A549 (cell line): ENCODE measurements at regions of chr19 and their contacts with region 1.

Region 1: GRCh38 chr19:35495107-35496064 is 5.1 kb upstream of the KRTDAP start:
- DNase-seq: peak; percentile 81 to 97
- ATAC-seq: peak; percentile 90 to 95
- H3K4me3 ChIP-seq: peak overlapping the region; percentile 24; the same call in 2 of the 3 replicates
- H3K27ac ChIP-seq: peak overlapping the region; percentile 35 to 64; a peak in 3 of 6 replicates
- H3K4me1 ChIP-seq: no peaks in the 10 kb centered on the region; the same call in 2 of the 3 replicates
- CTCF ChIP-seq: peak; percentile 96
- EP300 ChIP-seq: no peak
- POLR2A ChIP-seq: no peak
- RAD21 ChIP-seq: peak; percentile 83 to 85

Region 2: DNA sequence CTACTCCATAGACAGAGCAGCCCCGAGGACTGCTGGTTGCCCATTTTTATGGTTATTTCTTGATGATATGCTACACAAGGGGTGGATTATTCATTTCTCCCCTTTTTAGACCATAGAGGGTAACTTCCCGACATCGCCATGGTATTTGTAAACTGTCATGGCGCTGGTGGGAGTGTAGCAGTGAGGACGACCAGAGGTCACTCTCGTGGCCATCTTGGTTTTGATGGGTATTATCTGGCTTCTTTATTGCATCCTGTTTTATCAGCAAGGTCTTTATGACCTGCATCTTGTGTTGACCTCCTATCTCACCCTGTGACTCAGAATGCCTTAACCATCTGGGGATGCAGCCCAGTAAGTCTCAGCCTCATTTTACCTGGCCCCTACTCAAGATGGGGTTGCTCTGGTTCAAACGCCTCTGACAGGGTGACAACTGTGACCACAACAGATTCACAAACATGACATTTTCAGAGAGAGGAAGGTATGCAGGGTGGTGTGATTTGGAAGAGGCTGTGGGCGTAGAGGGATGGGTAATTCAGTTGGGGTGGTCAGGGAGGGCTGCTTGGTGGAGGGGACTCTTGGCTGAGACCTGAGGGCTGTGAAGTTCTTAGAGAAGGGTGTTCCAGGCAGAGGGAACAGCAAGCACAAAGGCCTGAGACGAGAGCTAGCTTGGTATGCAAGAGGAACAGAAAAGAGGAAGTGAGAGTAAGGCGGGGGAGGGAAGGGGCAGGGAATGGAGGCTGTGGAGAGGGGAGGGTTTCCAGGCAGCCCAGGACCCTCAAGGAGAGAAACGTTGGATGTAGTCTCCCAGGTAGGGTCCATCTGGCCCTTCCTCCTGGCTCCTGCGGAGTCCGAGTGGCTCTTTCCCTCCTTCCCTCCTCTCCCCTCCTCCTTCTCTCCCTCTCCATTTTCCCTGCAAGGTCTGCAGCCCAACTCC is 290.3 kb before region 1 on chr19:
- CTCF ChIA-PET with region 1: no interaction called
- POLR2A ChIA-PET with region 1: no interaction called
- DNase-seq: no peak
- ATAC-seq: 0 out of 6 replicates have a peak, but pooled peaks of 1 of the 2 experiments have one; percentile 17
- H3K4me3 ChIP-seq: no peak overlapping the region
- H3K27ac ChIP-seq: no peak overlapping the region
- H3K4me1 ChIP-seq: no peaks in the 10 kb centered on the region
- CTCF ChIP-seq: no peak
- EP300 ChIP-seq: no peak
- POLR2A ChIP-seq: no peak
- RAD21 ChIP-seq: no peak

Region 3: GRCh38 chr19:35346193-35347052 is 149.0 kb before region 1 on chr19:
- CTCF ChIA-PET with region 1: interaction called, 256 read pairs
- POLR2A ChIA-PET with region 1: no interaction called
- DNase-seq: no peak
- ATAC-seq: no peak
- H3K4me3 ChIP-seq: no peak overlapping the region
- H3K27ac ChIP-seq: no peak overlapping the region
- H3K4me1 ChIP-seq: no peaks in the 10 kb centered on the region
- CTCF ChIP-seq: no peak
- EP300 ChIP-seq: no peak
- POLR2A ChIP-seq: no peak
- RAD21 ChIP-seq: no peak

Region 4: DNA sequence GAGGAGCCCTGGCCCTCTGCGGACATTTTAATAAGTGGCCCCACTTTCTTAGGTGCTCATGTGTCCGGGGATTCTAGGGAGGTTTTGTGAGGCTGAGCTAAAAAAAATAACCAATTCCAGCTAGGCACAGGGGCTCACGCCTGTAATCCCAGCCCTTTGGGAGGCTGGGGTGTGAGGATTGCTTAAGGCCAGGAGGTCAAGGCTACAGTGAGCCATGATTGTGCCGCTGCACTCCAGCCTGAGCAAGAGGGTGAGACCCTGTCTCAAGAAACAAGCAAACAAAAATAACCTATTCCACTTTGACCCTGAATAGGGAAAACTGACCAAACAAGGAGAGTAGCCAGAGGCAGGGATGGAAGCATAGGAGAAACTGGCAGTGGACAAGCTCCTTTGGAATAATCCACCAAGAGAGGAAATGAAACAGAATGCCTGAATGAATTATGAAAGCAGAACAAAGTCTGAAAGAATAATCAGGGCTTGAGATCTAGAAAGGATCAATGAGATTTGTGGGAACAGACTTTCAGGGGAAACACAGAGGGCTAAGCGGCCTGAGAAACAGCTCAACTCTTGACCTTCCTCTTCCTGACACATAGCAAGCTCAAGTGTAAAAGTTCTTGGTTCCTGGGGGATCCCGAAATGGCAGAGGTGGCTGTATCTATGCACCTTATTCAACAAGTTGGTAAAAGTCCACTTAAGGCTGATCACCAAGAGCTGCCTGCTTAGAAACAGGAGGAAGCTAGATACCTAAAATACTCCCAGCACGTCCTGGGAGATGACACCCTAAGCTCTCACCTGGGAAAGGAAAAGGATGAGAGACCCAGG is 77.5 kb before region 1 on chr19:
- CTCF ChIA-PET with region 1: interaction called, 13 read pairs
- POLR2A ChIA-PET with region 1: no interaction called
- DNase-seq: no peak
- ATAC-seq: no peak
- H3K4me3 ChIP-seq: no peak overlapping the region
- H3K27ac ChIP-seq: no peak overlapping the region
- H3K4me1 ChIP-seq: 0 out of 3 replicates have a peak, but pooled peaks cover 8% of the 10 kb centered on the region
- CTCF ChIP-seq: no peak
- EP300 ChIP-seq: no peak
- POLR2A ChIP-seq: no peak
- RAD21 ChIP-seq: no peak

Region 5: GRCh38 chr19:35468637-35469036 is 26.7 kb before region 1 on chr19:
- CTCF ChIA-PET with region 1: interaction called, 22 read pairs
- POLR2A ChIA-PET with region 1: no interaction called
- DNase-seq: peak; percentile 72 to 82
- ATAC-seq: peak; percentile 99
- H3K4me3 ChIP-seq: no peak overlapping the region
- H3K27ac ChIP-seq: no peak overlapping the region
- H3K4me1 ChIP-seq: no peaks in the 10 kb centered on the region
- CTCF ChIP-seq: peak; percentile 74
- EP300 ChIP-seq: no peak
- POLR2A ChIP-seq: no peak
- RAD21 ChIP-seq: peak; percentile 80 to 85

Region 6: DNA sequence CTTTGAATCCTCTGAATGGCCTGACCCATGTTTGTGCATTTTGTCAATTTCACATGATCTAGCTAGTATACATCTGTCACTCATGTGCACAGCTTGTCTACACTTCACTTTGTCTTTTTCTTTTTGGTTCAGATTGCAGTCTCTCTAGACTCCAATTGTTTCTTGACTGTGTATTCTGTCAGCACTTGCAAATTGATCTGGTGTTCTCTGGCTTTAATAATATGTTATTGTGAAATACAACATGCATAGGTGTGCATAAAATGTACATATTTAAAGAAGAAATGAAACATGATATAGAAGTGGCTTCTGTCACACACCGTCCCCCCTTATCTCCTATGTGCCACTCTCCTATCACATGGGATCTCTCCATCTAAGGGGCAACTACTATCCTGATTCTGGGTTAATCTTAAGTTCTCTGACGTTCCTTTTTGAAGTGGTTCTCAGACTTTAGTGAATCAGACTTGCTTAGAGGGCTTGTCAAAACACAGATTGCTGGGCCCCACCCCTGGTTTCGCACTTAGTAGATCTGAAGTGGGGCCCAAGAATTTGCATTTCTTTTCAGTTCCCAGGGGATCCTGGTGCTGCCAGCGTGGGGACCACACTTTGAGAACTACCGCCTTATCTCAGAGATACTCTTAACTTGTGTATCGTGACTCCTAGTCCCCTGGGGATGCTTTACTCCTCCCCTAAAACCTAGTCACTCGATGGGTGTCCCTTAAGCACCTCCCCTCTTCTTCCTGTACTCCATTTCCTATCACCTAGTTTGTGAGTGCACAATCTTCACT is 10.9 kb before region 1 on chr19:
- CTCF ChIA-PET with region 1: interaction called, 86 read pairs
- POLR2A ChIA-PET with region 1: no interaction called
- DNase-seq: no peak
- ATAC-seq: no peak
- H3K4me3 ChIP-seq: no peak overlapping the region
- H3K27ac ChIP-seq: no peak overlapping the region
- H3K4me1 ChIP-seq: no peaks in the 10 kb centered on the region
- CTCF ChIP-seq: no peak
- EP300 ChIP-seq: no peak
- POLR2A ChIP-seq: no peak
- RAD21 ChIP-seq: no peak

Region 7: GRCh38 chr19:35528218-35529038 is 33.0 kb after region 1 on chr19 and contains the start of gene SBSN:
- CTCF ChIA-PET with region 1: interaction called, 11 read pairs
- POLR2A ChIA-PET with region 1: no interaction called
- DNase-seq: no peak
- ATAC-seq: no peak
- H3K4me3 ChIP-seq: no peak within 1 kb of the TSS
- H3K27ac ChIP-seq: no peak within 1 kb of the TSS
- H3K4me1 ChIP-seq: peaks cover 7% of the 10 kb centered on the region; the same call in 2 of the 3 replicates
- CTCF ChIP-seq: no peak
- EP300 ChIP-seq: no peak
- POLR2A ChIP-seq: no peak
- RAD21 ChIP-seq: no peak
- polyA plus RNA-seq, gene SBSN: 0.28 TPM in 2 replicates